Natural killer cell (primary cell): ENCODE measurements at regions of chr6 and their contacts with region 1.

Region 1: GRCh38 chr6:109440331-109441068 is at the starts of genes PPIL6 and SMPD2:
- DNase-seq: peak; percentile 81 to 90
- ATAC-seq: peak; percentile 87 to 94 (median 89)
- H3K4me3 ChIP-seq: peak within 1 kb of the TSS; percentile 64
- H3K4me3 Mint-ChIP-seq: peak within 1 kb of the TSS; percentile 89
- H3K27ac ChIP-seq: peak within 1 kb of the TSS; percentile 74
- H3K27ac Mint-ChIP-seq: peak within 1 kb of the TSS; percentile 81 to 92
- H3K4me1 ChIP-seq: peaks cover 23% of the 10 kb centered on the region
- H3K4me1 Mint-ChIP-seq: peaks cover 17 to 32% of the 10 kb centered on the region in 2 donors
- H3K27me3 ChIP-seq: no peaks in the 10 kb centered on the region
- H3K27me3 Mint-ChIP-seq: no peaks in the 10 kb centered on the region
- CTCF ChIP-seq: no peak
- total RNA-seq, gene PPIL6: 0.28 to 0.70 (median 0.40) TPM
- total RNA-seq, gene SMPD2: 25.0 to 37.3 (median 29.3) TPM

Region 2: GRCh38 chr6:109187399-109188114 is 252.9 kb before region 1 on chr6:
- intact Hi-C with region 1: loop called (anchors 5 kb)
- DNase-seq: peak; percentile 43 to 82
- ATAC-seq: peak; percentile 71 to 92 (median 89)
- H3K4me3 ChIP-seq: no peak overlapping the region
- H3K4me3 Mint-ChIP-seq: no peak overlapping the region
- H3K27ac ChIP-seq: no peak overlapping the region
- H3K27ac Mint-ChIP-seq: no peak overlapping the region
- H3K4me1 ChIP-seq: no peaks in the 10 kb centered on the region
- H3K4me1 Mint-ChIP-seq: no peaks in the 10 kb centered on the region
- H3K27me3 ChIP-seq: peaks cover 3% of the 10 kb centered on the region
- H3K27me3 Mint-ChIP-seq: peaks cover 12 to 45% of the 10 kb centered on the region in 2 donors
- CTCF ChIP-seq: peak; percentile 98

Region 3: GRCh38 chr6:109482905-109483735 is 42.6 kb after region 1 on chr6 and contains the start of gene ZBTB24:
- intact Hi-C with region 1: loop called (anchors 2 kb)
- DNase-seq: peak; percentile 86 to 95
- ATAC-seq: peak; percentile 86 to 95 (median 91)
- H3K4me3 ChIP-seq: peak within 1 kb of the TSS; percentile 80
- H3K4me3 Mint-ChIP-seq: peak within 1 kb of the TSS; percentile 92
- H3K27ac ChIP-seq: peak within 1 kb of the TSS; percentile 64
- H3K27ac Mint-ChIP-seq: peak within 1 kb of the TSS; percentile 67 to 85
- H3K4me1 ChIP-seq: peaks cover 32% of the 10 kb centered on the region
- H3K4me1 Mint-ChIP-seq: peaks cover 42 to 53% of the 10 kb centered on the region in 2 donors
- H3K27me3 ChIP-seq: no peaks in the 10 kb centered on the region
- H3K27me3 Mint-ChIP-seq: no peaks in the 10 kb centered on the region
- CTCF ChIP-seq: no peak
- total RNA-seq, gene ZBTB24: 6.7 to 10.6 (median 8.6) TPM

Region 4: DNA sequence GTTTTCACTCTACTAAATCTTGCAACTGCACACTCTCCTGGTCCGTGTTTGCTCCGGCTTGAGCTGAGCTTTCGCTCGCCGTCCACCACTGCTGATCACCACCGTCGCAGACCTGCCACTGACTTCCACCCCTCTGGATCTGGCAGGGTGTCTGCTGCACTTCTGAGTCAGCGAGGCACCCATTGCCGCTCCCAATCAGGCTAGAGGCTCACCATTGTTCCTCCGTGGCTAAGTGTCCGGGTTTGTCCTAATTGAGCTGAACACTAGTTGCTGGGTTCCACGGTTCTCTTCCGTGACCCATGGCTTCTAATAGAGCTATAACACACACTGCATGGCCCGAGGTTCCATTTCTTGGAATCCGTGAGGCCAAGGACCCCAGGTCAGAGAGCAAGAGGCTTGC is 439.0 kb after region 1 on chr6:
- intact Hi-C with region 1: no loop called
- DNase-seq: no peak
- ATAC-seq: no peak
- H3K4me3 ChIP-seq: no peak overlapping the region
- H3K4me3 Mint-ChIP-seq: no peak overlapping the region
- H3K27ac ChIP-seq: no peak overlapping the region
- H3K27ac Mint-ChIP-seq: no peak overlapping the region
- H3K4me1 ChIP-seq: no peaks in the 10 kb centered on the region
- H3K4me1 Mint-ChIP-seq: no peaks in the 10 kb centered on the region
- H3K27me3 ChIP-seq: no peaks in the 10 kb centered on the region
- H3K27me3 Mint-ChIP-seq: peaks cover 12 to 17% of the 10 kb centered on the region in 2 donors
- CTCF ChIP-seq: no peak